GM18951 (cell line): ENCODE measurements at regions of chr6 and their contacts with region 1.

Region 1: GRCh38 chr6:168895102-168895812 is 358.4 kb downstream of the THBS2 start:
- POLR2A ChIP-seq: no peak

Region 2: GRCh38 chr6:168370310-168370991 is 524.8 kb before region 1 on chr6:
- in situ Hi-C with region 1: loop called (anchors 25 kb)
- POLR2A ChIP-seq: no peak